Aorta (tissue), 5 donors: ENCODE measurements at regions of chr14 and their contacts with region 1.

Region 1: GRCh38 chr14:90651976-90652560 is 164.2 kb downstream of the TTC7B start:
- DNase-seq: no peak
- ATAC-seq: no peak
- H3K4me3 ChIP-seq: no peak overlapping the region
- H3K27ac ChIP-seq: no peak overlapping the region
- H3K4me1 ChIP-seq: peaks cover 0 to 4% of the 10 kb centered on the region in 2 donors
- H3K27me3 ChIP-seq: no peaks in the 10 kb centered on the region

Region 2: DNA sequence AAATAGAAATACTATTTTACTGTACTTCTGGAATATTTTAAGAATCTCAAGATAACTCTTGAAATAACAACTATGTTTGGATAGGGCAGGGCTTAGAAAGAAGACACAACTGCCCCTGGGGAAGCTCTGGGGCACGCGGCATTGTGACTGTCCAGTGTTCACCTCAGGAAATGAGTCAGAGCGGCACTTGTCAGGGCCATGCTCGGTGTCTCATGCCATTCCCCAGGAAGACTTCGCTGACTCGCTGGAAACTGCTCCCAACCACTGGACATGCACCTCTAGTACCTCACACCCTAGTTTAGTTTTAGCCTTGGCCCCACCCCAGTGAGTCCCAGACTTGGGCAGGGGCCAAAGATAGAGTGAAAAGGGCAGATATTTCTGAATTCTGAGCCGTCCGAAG is 27.8 kb before region 1 on chr14:
- intact Hi-C with region 1: loop called in 1 of 2 experiments (anchors 2 kb)
- DNase-seq: peak in 1 of 2 donors; percentile 84
- ATAC-seq: no peak
- H3K4me3 ChIP-seq: no peak overlapping the region
- H3K27ac ChIP-seq: no peak overlapping the region
- H3K4me1 ChIP-seq: no peaks in the 10 kb centered on the region
- H3K27me3 ChIP-seq: no peaks in the 10 kb centered on the region

Region 3: DNA sequence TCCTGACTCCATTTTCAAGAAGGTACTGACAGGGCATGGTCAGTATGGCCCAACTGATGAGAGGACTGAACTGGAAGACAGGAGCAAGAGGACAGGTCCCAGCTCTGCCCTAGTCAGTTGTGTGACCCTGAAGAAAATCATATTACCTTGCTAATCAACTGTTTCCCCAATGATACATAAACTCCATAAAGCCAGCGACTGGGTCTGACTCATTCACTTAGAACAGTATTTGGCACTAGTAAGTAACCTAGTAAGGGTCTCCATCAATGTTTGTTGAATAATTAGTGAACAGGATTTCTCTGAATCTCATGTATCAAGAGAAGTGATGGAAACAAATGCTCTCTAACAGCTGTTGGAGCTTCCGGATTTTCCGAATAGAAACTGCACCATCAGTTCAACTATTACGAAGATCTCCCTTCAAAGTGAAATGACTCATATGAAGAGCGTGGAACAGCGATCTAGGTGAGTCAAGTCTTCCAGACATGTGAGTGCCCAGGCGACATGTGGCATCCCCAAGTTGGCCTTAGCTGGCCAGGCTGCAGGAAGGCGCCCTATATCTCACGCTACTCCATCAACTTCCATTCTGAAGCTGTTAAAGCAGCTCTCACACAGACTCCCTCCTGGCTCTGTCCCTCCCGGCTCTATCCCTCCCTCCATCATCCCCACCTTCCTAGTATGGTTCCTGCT is 69.7 kb after region 1 on chr14:
- intact Hi-C with region 1: no loop called
- DNase-seq: no peak
- ATAC-seq: no peak
- H3K4me3 ChIP-seq: no peak overlapping the region
- H3K27ac ChIP-seq: no peak overlapping the region
- H3K4me1 ChIP-seq: peaks cover 0 to 2% of the 10 kb centered on the region in 2 donors
- H3K27me3 ChIP-seq: no peaks in the 10 kb centered on the region

Region 4: GRCh38 chr14:90733139-90733808 is 81.2 kb after region 1 on chr14:
- intact Hi-C with region 1: no loop called
- DNase-seq: no peak
- ATAC-seq: no peak
- H3K4me3 ChIP-seq: no peak overlapping the region
- H3K27ac ChIP-seq: no peak overlapping the region
- H3K4me1 ChIP-seq: no peaks in the 10 kb centered on the region
- H3K27me3 ChIP-seq: no peaks in the 10 kb centered on the region